Right ventricle myocardium inferior (tissue), 1 donor: ENCODE measurements at regions of chrX and their contacts with region 1.

Region 1: GRCh38 chrX:43836435-43837184 is 45.6 kb downstream of the MAOB start:
- DNase-seq: no peak
- ATAC-seq: no peak

Region 2: GRCh38 chrX:43882299-43882694 is 45.7 kb after region 1 on chrX and contains the start of gene MAOB:
- intact Hi-C with region 1: loop called (anchors 5 kb)
- DNase-seq: peak; percentile 64
- ATAC-seq: peak; percentile 92
- total RNA-seq, gene MAOB: 126 TPM

Region 3: GRCh38 chrX:43939187-43939926 is 102.7 kb after region 1 on chrX:
- intact Hi-C with region 1: loop called (anchors 1 kb)
- DNase-seq: no peak
- ATAC-seq: no peak